BJ (cell line): ENCODE measurements at regions of chr16 and their contacts with region 1.

Region 1: DNA sequence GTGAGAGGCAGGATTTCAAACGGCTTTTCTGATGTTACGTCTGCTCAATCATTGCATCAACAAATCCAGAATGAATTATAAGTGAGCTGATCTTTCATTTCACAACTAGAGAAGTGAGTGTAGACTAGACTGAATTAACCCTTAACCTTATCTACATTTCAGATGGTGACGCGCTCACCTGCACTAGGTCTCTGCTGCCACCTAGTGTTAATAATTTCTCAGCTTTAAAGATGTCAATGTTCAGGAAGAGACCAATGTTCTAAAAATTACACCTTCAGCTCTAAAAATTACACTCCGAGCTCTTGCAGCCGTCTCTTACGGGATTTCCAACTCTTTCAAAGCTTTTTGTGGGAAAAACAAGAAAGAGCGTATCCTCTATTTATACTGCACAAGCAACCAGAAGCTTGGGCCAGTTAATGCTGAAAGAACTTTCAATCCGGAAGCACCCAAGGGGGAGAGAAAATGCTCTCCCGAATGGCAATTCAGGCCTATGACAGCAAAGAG is 88.2 kb upstream of the FA2H start:
- DNase-seq: no peak
- H3K4me3 ChIP-seq: no peak overlapping the region
- H3K27me3 ChIP-seq: no peaks in the 10 kb centered on the region; the same call in 1 of the 2 replicates
- CTCF ChIP-seq: peak; percentile 74

Region 2: DNA sequence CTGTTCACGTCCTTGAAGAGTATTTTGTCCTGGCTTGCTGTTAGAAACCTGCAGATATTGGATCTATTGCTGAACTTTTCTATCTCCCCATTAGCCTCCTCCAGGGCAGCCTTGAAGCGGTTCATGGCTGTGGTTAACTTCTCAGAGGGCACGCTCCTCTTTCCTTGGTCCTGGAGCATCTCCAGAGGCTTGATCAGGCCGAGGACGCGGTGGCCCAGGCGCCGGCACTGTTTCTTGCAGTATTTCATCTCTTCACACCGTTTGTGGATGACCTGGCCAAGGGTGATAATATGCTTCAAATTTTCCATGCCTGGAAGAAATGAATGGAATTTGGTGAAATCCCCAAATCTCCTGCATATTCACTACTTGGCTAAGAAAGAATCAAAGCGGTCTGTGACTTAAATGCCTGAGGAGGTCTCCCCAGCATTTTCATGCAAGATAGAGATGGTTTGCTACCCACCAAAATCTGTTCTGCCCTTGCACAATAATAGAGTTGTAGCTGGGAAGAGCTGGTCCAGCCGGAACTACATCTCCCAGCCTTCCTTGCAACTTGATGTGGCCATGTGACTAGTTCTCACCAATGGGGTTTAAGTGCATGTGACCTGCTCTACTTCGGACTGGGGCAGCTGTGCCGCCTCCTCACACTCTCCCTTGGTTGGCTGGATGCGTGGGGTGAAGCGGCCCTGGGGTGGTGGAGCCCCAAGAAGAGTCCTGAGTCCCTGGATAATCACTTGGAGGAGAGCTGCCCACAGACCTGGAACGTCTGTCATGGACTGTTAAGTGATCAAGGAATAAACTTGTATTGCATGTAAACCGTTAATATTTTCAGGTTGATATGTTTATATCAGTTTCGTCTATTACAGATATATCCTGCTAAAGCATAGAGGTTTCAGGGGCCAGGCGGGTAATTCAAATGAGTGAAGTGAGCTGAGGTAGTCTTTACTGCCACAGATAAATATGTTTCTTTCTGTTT is 167.1 kb before region 1 on chr16:
- CTCF ChIA-PET with region 1: interaction called, 24 read pairs
- POLR2A ChIA-PET with region 1: no interaction called
- DNase-seq: peak; percentile 55
- H3K4me3 ChIP-seq: peak overlapping the region; percentile 18; the same call in 1 of the 2 replicates
- H3K27me3 ChIP-seq: no peaks in the 10 kb centered on the region
- CTCF ChIP-seq: no peak

Region 3: DNA sequence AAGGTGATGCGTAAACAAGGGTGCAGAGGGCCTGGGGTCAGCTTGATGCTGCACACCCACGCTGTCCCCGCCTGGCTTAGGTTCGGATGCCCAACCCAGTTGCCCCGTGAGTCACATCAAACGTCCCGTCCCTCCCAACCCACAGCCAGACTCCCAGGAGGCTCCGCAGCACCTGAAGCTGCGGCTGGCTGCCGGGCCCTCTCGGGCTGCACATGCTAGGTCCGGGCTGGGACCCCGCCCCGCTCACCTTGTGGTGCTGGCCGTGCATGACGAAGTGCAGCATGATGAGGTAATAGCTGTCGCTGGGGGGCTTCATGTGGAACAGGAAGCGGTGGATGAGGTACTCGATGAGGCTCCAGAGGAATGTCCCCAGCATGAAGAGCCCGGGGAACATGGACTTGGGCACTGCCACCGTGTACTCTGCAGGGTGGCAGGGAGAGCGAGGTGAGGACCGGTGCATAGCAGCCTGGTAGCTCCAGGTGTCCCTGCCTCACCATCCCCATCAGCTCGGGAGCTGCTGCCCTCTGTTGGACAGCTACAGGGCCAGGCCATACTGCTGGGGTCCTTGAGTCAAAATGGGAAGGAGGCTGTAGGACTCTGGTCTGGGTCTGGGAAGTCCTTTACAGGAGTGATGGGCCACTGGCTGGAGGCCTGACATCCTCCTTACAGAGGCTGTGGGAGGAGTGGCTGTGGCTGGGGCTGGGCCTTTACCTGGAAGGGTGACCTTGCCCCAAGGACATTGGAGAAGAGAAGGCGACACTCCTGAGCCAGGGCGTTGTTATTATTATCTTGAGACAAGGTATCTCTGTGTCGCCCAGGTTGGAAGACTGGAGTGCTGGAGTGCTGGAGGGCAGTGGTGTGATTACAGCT is 143.8 kb before region 1 on chr16:
- CTCF ChIA-PET with region 1: interaction called, 93 read pairs
- POLR2A ChIA-PET with region 1: no interaction called
- DNase-seq: no peak
- H3K4me3 ChIP-seq: no peak overlapping the region
- H3K27me3 ChIP-seq: peaks cover 4% of the 10 kb centered on the region
- CTCF ChIP-seq: no peak

Region 4: DNA sequence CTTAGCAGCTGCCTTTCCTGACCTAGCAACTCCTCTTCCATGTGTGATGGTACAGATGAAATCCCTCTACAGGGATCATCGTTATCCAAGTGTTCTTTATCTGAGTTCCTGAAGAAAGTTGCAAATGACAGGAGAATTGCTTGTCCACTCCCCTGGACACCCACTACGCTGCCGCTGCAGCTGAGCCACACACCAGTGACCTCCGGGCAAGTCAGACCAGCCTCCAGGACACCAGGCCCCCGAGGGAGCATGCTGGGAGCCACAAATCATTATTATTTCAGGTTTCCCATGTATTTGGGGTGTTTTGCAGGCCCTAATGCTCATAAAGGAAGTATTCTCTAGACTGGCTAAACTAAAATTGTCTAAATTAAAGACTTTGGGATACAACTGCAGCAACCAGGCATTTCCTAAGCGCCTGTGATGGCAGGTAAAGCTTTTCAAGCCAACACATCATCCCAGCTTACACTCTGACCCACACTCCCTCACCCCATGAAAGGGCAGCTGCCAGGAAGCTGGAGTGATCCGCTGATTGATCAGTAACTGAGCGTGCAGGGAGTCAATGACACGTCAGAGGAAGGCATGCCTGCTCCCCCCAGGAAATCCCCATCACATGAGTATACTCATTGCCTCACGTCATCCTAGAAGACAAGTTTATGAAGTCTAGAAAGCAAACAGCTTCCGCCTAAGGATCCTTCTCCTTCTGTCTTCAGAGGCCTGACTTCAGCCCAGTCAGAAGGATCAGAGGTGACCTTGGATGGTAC is 102.6 kb before region 1 on chr16:
- CTCF ChIA-PET with region 1: no interaction called
- POLR2A ChIA-PET with region 1: no interaction called
- DNase-seq: no peak
- H3K4me3 ChIP-seq: no peak overlapping the region
- H3K27me3 ChIP-seq: peaks cover 2% of the 10 kb centered on the region; the same call in 1 of the 2 replicates
- CTCF ChIP-seq: no peak

Region 5: DNA sequence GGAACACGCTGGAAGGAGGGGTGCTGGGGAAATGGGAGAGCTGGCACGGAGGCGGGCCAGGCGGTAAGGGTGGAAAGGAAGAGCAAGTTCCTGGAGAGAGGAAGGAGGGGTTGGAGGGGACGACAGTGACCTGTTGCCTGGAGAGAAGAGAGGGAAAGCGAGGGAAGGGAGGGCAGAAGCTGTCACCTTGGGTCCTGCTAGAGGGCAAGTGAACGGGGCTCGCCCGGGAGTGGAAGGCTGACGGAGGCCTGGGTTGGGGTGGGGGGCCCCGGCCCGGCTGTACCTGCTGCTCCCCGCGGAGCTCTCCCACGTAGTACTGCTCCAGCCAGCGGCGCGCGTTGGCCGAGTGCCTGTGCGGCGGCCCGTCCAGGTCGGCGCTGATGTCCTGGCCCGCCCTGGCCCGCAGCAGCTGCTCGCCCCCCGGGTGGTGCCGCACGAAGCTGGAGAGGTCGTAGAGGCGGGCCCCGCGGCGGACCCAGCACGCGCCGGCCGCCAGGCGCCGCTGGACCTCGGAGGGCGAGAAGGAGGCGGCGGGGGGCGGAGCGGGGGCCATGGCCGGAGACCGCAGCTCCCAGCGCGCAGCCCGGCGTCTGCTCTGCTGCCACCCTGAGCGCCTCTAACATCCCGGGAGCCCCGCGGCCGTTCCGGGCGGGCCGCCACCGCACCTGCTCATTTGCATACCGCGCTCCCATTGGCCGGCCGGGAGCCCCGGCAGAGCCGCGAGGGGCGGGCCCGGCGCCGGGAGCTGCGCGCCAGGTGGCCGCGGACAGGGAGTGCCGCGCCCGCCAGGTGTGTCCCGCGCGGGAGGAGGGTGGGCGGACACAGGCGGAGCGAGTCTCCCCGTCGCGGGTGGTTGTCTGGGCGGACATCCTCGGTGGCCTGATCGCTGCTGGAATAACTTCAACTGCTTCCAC is 88.3 kb before region 1 on chr16 and contains the start of gene FA2H:
- CTCF ChIA-PET with region 1: interaction called, 8 read pairs
- POLR2A ChIA-PET with region 1: interaction called, 12 read pairs
- DNase-seq: no peak
- H3K4me3 ChIP-seq: no peak within 1 kb of the TSS; the same call in 1 of the 2 replicates
- H3K27me3 ChIP-seq: peaks cover 23% of the 10 kb centered on the region
- CTCF ChIP-seq: no peak
- polyA plus RNA-seq, gene FA2H: not detected in 2 replicates

Region 6: DNA sequence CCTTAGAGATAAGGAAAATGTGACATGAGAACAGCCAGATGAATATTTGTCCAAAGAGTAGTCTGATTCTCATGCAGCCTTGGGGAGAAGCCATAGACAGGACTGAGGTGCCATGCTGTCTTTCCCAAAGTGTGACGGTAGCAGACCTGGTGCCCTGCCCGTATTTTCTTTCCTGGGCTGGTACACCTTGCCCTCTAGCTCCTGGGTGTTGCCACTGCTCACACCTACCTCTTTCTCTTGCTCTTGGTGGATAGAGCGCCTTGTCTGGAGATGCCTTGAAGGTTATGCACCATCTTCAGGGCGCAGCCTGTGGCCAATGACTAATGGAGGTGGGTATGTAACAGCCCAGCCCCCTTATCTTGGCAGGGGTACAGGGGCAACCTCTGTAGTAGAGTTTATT is 41.9 kb before region 1 on chr16:
- CTCF ChIA-PET with region 1: interaction called, 13 read pairs
- POLR2A ChIA-PET with region 1: no interaction called
- DNase-seq: no peak
- H3K4me3 ChIP-seq: no peak overlapping the region
- H3K27me3 ChIP-seq: peaks cover 9% of the 10 kb centered on the region
- CTCF ChIP-seq: no peak

Region 7: DNA sequence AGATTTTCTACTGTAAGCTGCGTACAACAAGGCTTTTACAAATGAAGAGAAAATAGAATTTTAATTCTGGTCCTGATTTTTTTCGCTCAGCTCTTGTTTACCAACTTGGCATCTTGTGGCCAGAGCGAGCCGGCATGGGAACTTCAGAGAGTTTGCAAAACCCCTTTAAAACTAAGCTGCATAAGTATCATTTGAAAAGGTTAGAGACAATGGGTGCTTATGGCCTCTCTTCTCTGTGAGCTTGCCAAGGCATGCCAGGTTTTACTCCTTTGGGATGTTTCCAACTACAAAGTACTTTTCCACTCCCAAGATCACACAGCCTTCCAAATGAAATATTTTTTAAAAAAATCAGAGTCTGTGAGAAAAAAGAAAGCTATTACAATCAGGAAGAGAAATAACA is 25.7 kb before region 1 on chr16:
- CTCF ChIA-PET with region 1: interaction called, 13 read pairs
- POLR2A ChIA-PET with region 1: no interaction called
- DNase-seq: no peak
- H3K4me3 ChIP-seq: no peak overlapping the region
- H3K27me3 ChIP-seq: peaks cover 4% of the 10 kb centered on the region
- CTCF ChIP-seq: no peak

Region 8: DNA sequence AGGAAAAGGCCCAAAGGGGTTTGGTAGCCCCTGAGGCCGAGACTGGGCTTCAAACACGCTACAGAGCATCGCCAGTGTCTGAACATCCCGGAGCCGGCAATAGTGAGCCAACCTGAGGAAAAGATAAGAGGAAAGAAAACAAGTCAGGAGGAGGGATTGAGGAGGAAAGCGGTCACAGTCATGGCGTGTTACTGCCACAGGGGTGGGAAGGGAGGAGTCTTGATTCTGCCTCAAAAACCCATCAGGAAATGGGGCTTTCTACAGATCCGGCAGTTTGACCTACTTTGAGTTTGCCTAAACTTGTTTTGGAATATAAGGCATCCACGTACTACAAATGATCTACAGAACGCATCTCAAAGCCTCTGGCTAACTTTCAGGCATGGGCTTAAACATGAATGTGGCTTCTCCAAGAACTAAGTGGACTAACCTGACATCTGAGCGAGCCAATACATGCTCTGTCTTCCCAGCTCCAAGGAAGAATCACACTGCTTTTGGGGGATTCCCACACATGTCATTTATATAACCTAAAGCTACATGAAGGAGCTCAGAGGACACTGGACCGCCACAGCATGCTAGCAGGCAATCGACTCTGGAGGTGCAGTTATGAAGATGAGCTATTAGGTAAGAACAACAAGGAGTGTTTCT is 25.5 kb after region 1 on chr16:
- CTCF ChIA-PET with region 1: interaction called, 11 read pairs
- POLR2A ChIA-PET with region 1: no interaction called
- DNase-seq: no peak
- H3K4me3 ChIP-seq: no peak overlapping the region
- H3K27me3 ChIP-seq: no peaks in the 10 kb centered on the region
- CTCF ChIP-seq: no peak